ENCODE measurements at regions of chr1 and their contacts with region 1.

Region 1: DNA sequence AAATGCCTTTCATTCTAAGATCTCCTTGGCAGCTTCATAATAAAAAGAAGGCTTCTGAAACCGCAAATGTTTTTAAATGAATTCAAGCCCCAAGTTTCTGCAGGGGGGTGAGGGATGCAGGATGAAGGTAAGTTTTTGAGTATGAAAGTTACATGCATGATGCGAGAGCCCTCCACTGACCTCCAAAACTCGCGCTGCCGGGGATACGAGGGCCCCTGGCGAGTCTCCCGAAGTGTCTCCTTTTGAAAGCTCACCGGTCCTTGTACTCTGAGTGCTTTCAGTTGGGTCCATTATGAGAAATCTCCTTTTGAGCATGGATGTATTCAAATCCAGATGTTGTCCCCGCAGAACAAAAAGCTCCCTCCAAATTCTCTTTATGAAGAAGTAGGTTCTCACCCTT is 18.9 kb upstream of the ZC3H12A start:
- DNase-seq: no peak
- H3K4me3 ChIP-seq: no peak overlapping the region
- H3K27ac ChIP-seq: peak overlapping the region; percentile 40 to 63 (median 54)
- H3K4me1 ChIP-seq: peaks cover 3 to 11% (median 10%) of the 10 kb centered on the region in 4 donors
- H3K27me3 ChIP-seq: peaks cover 0 to under 1% (median 0%) of the 10 kb centered on the region in 4 donors
- CTCF ChIP-seq: no peak
- EP300 ChIP-seq: no peak
- POLR2A ChIP-seq: no peak

Region 2: DNA sequence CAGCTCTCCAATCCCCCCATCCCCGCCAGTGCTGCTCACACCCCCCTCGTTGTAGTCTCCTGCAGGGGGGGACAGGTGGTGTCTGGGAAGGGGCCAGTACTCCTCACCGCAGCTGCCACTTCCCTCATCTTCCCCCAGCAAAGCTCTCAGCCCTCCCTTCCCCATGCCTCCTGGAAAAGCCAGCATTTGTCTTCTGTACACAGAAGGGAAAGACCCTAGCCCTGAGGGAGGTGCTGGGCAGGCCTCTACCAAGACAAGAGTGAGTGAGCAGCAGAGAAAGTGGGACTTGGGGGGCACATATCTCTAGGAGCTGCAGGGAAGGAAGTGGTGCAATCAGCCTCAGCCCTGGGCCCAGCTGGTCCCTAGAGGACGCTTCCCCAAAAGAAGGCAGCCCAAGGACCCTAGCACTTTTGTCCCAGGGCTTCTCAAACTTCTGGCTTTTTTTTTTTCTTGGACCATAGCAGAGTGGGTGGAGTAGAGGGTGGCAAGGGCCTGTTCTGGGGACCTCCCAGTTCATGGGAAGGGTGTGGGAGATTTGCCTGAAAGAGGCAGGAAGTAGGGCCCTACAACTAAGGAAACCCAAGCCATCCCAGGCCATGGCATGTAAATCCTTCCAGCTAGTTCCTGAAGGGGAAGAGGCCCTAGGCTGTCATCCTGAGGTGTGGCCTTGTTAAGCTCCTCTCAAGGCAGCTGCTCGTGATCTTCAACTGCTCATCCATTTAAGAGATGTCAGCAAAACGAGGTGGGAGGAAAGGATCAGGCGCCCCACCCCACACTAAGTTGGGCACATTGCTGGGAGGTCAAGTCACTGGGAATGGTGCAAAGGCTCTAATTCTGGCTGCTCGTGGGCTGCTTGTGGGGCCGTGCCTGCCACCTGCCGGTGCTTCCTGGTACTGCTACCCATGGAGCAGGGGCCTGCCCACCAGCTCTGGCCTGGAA is 31.4 kb after region 1 on chr1:
- intact Hi-C with region 1: loop called (anchors 1 kb)
- DNase-seq: peak; percentile 95
- H3K4me3 ChIP-seq: no peak overlapping the region
- H3K27ac ChIP-seq: peak overlapping the region; percentile 72 to 83 (median 76)
- H3K4me1 ChIP-seq: peaks cover 29 to 43% (median 39%) of the 10 kb centered on the region in 4 donors
- H3K27me3 ChIP-seq: no peaks in the 10 kb centered on the region
- CTCF ChIP-seq: peak in 2 of 3 experiments; percentile 99
- EP300 ChIP-seq: no peak
- POLR2A ChIP-seq: no peak

Measured in esophagus muscularis mucosa (tissue), 4 donors.